Activated CD4-positive, alpha-beta memory T cell treated with anti-CD3 and anti-CD28 coated beads for 36 hours (primary cell): ENCODE measurements at regions of chr11 and their contacts with region 1.

Region 1: DNA sequence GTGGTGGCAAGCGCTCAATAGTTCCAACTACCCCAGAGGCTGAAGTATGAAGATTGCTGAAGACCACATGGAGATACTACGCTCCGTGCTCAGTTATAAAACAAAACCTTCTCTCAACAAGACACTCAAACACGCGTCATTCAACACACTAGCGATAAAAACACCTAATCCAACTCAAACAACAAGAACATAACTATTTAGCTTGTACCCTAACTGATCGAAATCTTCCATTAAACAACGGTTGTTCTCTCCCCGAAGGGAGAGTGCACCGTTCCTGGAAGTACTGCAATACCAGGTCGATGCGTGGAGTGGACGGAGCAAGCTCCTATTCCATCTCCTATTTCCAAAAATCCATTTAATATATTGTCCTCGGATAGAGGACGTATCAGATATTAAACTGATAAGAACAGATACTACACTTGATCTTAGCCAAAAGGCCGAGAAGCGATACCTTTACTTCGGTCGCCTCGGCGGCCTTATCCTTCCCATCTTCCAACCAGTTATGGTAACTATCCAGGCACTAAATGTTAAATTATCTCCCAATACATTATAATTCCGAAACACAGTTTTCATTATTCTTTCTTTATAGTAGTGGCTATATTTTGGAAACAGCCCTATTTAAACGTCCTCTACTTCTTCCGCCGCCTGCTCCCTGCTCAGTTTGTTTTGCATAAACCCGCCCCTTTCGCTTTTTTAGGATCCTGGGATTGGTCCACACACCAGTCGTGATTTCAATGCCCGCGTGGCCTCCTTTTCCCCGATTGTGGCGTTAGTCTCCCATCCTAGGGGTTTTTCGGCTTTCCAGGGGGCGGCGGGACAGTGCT is 2.2 kb upstream of the WDR74 start:
- DNase-seq: peak; percentile 88
- H3K4me3 Mint-ChIP-seq: no peak overlapping the region
- H3K27ac Mint-ChIP-seq: no peak overlapping the region
- H3K4me1 Mint-ChIP-seq: peaks cover 17% of the 10 kb centered on the region
- H3K27me3 Mint-ChIP-seq: no peaks in the 10 kb centered on the region

Region 2: DNA sequence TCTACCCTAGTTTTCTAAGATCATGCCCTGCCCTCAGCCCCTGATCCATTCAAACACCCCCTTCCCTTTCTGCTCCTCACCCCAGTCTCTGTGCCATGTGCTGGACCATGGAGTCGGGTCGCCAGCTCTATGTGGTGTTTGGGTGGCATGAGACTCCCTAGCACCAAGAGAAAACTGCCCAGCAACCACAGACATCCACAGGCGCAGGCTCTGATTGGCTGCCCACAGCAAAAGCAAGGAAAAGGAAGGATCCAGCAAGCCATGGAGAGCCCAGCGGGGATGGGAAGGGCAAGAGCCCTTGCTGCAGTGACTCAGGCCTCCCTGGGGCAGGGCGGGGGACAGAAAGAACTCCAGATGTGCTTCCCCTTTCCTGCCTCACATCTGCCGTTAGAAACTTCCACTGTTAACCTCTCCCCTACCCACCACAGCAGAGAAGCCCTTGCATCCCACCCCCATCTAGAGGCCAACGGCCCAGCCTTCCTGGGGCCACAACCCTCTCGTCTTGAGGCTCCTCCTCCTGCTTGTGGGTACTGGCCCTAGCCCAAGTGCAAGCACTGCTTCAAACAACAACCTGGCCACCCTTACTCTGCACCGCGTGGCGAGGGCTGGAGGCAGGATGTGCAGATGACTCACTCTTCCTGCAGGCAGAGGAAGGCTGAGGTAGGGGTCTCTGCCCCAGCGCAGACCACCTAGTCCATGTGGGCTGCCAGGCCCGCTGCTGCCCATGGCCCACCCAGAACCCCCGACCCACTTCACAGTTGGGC is 285.3 kb before region 1 on chr11:
- CTCF ChIA-PET with region 1: no interaction called
- POLR2A ChIA-PET with region 1: interaction called, 6 read pairs
- intact Hi-C with region 1: loop called (anchors 5 kb)
- DNase-seq: peak; percentile 94
- H3K4me3 Mint-ChIP-seq: peak overlapping the region; percentile 59
- H3K27ac Mint-ChIP-seq: peak overlapping the region; percentile 96
- H3K4me1 Mint-ChIP-seq: peaks cover 96% of the 10 kb centered on the region
- H3K27me3 Mint-ChIP-seq: peaks cover 2% of the 10 kb centered on the region

Region 3: DNA sequence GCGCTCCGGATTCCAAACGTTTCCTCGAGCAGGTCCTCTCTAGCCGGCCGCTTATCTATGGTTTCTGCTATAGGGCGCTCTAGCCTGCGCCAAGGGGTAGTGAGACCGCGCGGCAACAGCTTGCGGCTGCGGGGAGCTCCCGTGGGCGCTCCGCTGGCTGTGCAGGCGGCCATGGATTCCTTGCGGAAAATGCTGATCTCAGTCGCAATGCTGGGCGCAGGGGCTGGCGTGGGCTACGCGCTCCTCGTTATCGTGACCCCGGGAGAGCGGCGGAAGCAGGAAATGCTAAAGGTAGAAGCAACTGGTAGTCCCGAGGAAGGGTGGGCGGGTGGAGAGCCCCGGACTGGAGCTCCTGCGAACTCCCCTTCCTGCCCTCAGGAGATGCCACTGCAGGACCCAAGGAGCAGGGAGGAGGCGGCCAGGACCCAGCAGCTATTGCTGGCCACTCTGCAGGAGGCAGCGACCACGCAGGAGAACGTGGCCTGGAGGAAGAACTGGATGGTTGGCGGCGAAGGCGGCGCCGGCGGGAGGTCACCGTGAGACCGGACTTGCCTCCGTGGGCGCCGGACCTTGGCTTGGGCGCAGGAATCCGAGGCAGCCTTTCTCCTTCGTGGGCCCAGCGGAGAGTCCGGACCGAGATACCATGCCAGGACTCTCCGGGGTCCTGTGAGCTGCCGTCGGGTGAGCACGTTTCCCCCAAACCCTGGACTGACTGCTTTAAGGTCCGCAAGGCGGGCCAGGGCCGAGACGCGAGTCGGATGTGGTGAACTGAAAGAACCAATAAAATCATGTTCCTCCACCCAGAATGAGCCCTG is 169.8 kb before region 1 on chr11 and contains the starts of genes LBHD1 and UQCC3:
- CTCF ChIA-PET with region 1: no interaction called
- POLR2A ChIA-PET with region 1: interaction called, 24 read pairs
- intact Hi-C with region 1: no loop called
- DNase-seq: peak; percentile 93
- H3K4me3 Mint-ChIP-seq: peak within 1 kb of the TSS; percentile 94
- H3K27ac Mint-ChIP-seq: peak within 1 kb of the TSS; percentile 98
- H3K4me1 Mint-ChIP-seq: peaks cover 55% of the 10 kb centered on the region
- H3K27me3 Mint-ChIP-seq: no peaks in the 10 kb centered on the region
- total RNA-seq, gene LBHD1: 10.8 to 14.1 TPM
- total RNA-seq, gene UQCC3: 6.0 to 6.2 TPM

Region 4: GRCh38 chr11:62726915-62727763 is 114.4 kb before region 1 on chr11 and contains the start of gene HNRNPUL2:
- CTCF ChIA-PET with region 1: no interaction called
- POLR2A ChIA-PET with region 1: interaction called, 39 read pairs
- intact Hi-C with region 1: loop called (anchors 2 kb)
- DNase-seq: peak; percentile 99
- H3K4me3 Mint-ChIP-seq: peak within 1 kb of the TSS; percentile 99
- H3K27ac Mint-ChIP-seq: peak within 1 kb of the TSS; percentile 93
- H3K4me1 Mint-ChIP-seq: peaks cover 44% of the 10 kb centered on the region
- H3K27me3 Mint-ChIP-seq: no peaks in the 10 kb centered on the region
- total RNA-seq, gene HNRNPUL2: 56.0 to 62.3 TPM

Region 5: GRCh38 chr11:62771144-62772021 is 70.2 kb before region 1 on chr11 and contains the start of gene TAF6L:
- CTCF ChIA-PET with region 1: no interaction called
- POLR2A ChIA-PET with region 1: interaction called, 20 read pairs
- intact Hi-C with region 1: loop called (anchors 1 kb)
- DNase-seq: peak; percentile 98
- H3K4me3 Mint-ChIP-seq: peak within 1 kb of the TSS; percentile 79
- H3K27ac Mint-ChIP-seq: peak within 1 kb of the TSS; percentile 94
- H3K4me1 Mint-ChIP-seq: peaks cover 24% of the 10 kb centered on the region
- H3K27me3 Mint-ChIP-seq: no peaks in the 10 kb centered on the region
- total RNA-seq, gene TAF6L: 11.9 to 12.0 TPM

Region 6: DNA sequence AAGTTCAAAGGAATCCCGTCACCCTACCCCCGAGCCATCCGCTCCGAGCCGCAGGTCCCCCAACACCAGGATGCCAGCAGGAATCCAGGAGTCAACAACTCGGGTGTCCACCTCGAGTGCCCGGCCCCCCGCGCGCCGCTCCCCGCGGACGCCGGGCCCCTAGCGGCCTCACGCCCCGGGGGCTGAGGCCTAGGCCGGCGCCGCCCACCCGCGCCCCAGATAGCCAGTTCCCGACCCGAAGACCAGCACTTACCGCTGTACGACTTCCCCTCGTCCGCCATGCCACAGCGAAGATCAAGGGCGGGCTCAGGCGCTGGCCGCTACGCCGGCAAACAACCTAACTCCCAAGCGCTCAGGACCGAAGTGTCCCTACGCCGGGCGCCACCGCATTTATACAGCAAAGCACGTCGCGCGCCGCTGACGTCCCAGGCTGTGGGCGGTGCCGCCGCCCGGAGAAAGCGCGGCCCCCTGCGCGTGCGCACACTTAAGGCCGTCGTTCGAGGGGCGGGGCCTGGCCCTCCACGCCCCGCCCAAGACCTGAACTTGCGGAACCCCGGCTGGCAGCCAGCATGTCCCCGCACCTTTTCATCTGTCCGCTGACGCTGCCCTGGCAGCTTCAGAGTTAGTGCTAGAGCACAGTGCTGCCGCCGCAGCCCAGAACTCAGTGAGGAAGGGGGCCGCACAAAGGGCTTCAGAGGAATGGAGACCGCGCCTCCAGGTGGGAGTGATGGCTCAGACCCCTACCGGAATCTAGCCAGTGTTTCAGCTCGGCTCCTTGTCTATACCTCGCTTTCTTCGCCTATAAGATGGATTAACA is 36.3 kb before region 1 on chr11 and contains the start of gene NXF1:
- CTCF ChIA-PET with region 1: interaction called, 3 read pairs
- POLR2A ChIA-PET with region 1: interaction called, 39 read pairs
- intact Hi-C with region 1: loop called (anchors 1 kb)
- DNase-seq: peak; percentile 96
- H3K4me3 Mint-ChIP-seq: peak within 1 kb of the TSS; percentile 99
- H3K27ac Mint-ChIP-seq: peak within 1 kb of the TSS; percentile 99
- H3K4me1 Mint-ChIP-seq: peaks cover 34% of the 10 kb centered on the region
- H3K27me3 Mint-ChIP-seq: no peaks in the 10 kb centered on the region
- total RNA-seq, gene NXF1: 70.8 to 83.6 TPM